CD4-positive, alpha-beta memory T cell (primary cell): ENCODE measurements at regions of chr4 and their contacts with region 1.

Region 1: GRCh38 chr4:39458505-39459300 is at the starts of genes LIAS and RPL9:
- DNase-seq: peak; percentile 92 to 96 (median 94)
- H3K4me3 ChIP-seq: peak within 1 kb of the TSS; percentile 96 to 97
- H3K4me3 Mint-ChIP-seq: peak within 1 kb of the TSS; percentile 96 to 99 (median 98)
- H3K27ac ChIP-seq: peak within 1 kb of the TSS; percentile 99
- H3K27ac Mint-ChIP-seq: peak within 1 kb of the TSS; percentile 99 to 100 (median 100)
- H3K4me1 ChIP-seq: peaks cover 33% of the 10 kb centered on the region
- H3K4me1 Mint-ChIP-seq: peaks cover 22 to 55% (median 33%) of the 10 kb centered on the region in 4 donors
- H3K27me3 ChIP-seq: no peaks in the 10 kb centered on the region
- H3K27me3 Mint-ChIP-seq: no peaks in the 10 kb centered on the region
- total RNA-seq, gene LIAS: 21.7 to 24.7 TPM
- total RNA-seq, gene RPL9: 2,318 to 2,449 TPM

Region 2: DNA sequence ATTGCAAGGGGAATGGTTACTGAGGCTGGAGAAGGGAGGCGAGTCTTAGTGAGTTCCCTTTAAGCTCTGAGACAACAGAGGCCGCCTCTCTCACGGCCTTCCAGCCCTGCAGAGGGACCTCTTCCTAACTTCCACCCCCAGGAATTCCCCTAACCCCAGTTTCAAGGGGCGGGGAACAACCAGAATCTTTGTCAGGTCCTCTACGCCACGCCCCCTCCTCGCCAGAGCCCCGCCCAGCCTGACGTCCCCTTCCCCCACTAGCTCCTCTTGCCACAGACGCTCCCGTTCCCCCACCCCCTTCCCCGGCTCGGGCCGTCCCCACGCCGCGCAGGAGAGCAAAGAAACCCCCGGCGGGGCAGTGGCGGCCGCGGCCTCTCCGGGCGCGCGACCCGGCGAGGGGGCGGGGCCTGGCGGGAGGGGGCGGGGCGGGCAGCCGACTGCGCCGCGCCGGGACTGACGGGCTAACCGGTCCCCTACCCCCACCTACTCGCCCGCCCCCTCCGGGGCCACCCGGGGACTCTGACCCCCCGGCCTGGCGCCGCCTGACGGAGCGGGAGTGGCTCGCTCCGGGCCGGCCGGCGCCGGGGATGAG is 414.2 kb before region 1 on chr4:
- CTCF ChIA-PET with region 1: no interaction called
- POLR2A ChIA-PET with region 1: no interaction called
- intact Hi-C with region 1: loop called (anchors 5 kb)
- DNase-seq: peak; percentile 91 to 100 (median 95)
- H3K4me3 ChIP-seq: peak overlapping the region; percentile 18 to 57
- H3K4me3 Mint-ChIP-seq: peak overlapping the region; percentile 87 to 98 (median 92)
- H3K27ac ChIP-seq: peak overlapping the region; percentile 82
- H3K27ac Mint-ChIP-seq: peak overlapping the region; percentile 94 to 98 (median 97)
- H3K4me1 ChIP-seq: peaks cover 46% of the 10 kb centered on the region
- H3K4me1 Mint-ChIP-seq: peaks cover 39 to 60% (median 45%) of the 10 kb centered on the region in 4 donors
- H3K27me3 ChIP-seq: no peaks in the 10 kb centered on the region
- H3K27me3 Mint-ChIP-seq: no peaks in the 10 kb centered on the region

Region 3: DNA sequence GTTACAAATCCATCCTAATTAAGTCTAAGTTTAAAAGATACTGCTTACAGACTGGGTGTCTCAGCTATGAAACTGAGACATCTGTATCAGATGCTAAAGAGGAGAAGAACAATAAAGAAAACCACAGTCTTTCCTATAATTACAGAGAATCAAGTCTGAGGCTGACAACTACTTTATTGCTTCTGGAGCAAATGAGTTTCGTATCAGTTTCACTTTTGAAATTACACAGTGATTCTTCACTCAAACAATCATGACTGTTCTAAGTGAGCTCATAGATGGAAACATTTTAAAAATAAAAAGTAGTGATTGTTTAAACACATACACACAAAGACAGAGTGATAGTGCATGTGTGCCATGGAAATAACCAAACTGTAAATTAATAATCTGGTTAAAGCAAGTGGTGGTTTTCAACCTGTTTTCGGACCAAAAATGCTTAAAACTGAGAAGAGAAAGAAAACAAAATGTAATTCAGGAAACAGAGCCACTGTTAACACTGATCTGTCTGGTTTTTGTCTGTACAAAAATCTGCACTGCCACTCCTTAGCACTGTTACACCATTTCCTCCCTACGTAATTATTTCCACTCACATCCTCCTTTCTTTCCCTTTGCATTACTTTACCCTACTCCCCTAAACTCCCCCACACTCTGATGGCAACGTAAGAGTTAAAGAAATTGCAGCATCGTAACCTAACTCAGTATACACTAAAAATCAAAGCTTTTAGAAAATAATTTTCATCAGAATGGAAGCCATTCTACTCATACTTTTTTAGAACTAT is 105.0 kb before region 1 on chr4:
- CTCF ChIA-PET with region 1: no interaction called
- POLR2A ChIA-PET with region 1: interaction called, 8 read pairs
- intact Hi-C with region 1: loop called (anchors 2 kb)
- DNase-seq: peak; percentile 46 to 70 (median 63)
- H3K4me3 ChIP-seq: peak overlapping the region; percentile 3 to 61
- H3K4me3 Mint-ChIP-seq: peak overlapping the region; percentile 79 to 92 (median 84)
- H3K27ac ChIP-seq: peak overlapping the region; percentile 73
- H3K27ac Mint-ChIP-seq: peak overlapping the region; percentile 91 to 98 (median 94)
- H3K4me1 ChIP-seq: peaks cover 58% of the 10 kb centered on the region
- H3K4me1 Mint-ChIP-seq: peaks cover 39 to 77% (median 53%) of the 10 kb centered on the region in 4 donors
- H3K27me3 ChIP-seq: no peaks in the 10 kb centered on the region
- H3K27me3 Mint-ChIP-seq: no peaks in the 10 kb centered on the region

Region 4: DNA sequence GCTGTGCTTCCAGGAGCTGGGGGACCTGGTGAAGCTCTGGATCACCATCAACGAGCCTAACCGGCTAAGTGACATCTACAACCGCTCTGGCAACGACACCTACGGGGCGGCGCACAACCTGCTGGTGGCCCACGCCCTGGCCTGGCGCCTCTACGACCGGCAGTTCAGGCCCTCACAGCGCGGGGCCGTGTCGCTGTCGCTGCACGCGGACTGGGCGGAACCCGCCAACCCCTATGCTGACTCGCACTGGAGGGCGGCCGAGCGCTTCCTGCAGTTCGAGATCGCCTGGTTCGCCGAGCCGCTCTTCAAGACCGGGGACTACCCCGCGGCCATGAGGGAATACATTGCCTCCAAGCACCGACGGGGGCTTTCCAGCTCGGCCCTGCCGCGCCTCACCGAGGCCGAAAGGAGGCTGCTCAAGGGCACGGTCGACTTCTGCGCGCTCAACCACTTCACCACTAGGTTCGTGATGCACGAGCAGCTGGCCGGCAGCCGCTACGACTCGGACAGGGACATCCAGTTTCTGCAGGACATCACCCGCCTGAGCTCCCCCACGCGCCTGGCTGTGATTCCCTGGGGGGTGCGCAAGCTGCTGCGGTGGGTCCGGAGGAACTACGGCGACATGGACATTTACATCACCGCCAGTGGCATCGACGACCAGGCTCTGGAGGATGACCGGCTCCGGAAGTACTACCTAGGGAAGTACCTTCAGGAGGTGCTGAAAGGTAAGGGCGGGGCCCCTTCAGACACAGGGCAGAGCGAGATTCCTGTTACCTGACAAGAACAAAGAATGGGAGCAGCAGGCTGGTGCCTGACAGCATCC is 11.7 kb before region 1 on chr4:
- CTCF ChIA-PET with region 1: interaction called, 3 read pairs
- POLR2A ChIA-PET with region 1: interaction called, 39 read pairs
- intact Hi-C with region 1: no loop called
- DNase-seq: peak in 4 of 5 donors; percentile 35 to 71 (median 45)
- H3K4me3 ChIP-seq: no peak overlapping the region
- H3K4me3 Mint-ChIP-seq: peak overlapping the region; percentile 40 to 75 (median 70)
- H3K27ac ChIP-seq: peak overlapping the region; percentile 31
- H3K27ac Mint-ChIP-seq: peak overlapping the region in 5 of 7 donors; percentile 56 to 66 (median 61)
- H3K4me1 ChIP-seq: peaks cover 8% of the 10 kb centered on the region
- H3K4me1 Mint-ChIP-seq: peaks cover 0 to 12% (median 7%) of the 10 kb centered on the region in 4 donors
- H3K27me3 ChIP-seq: no peaks in the 10 kb centered on the region
- H3K27me3 Mint-ChIP-seq: no peaks in the 10 kb centered on the region

Region 5: DNA sequence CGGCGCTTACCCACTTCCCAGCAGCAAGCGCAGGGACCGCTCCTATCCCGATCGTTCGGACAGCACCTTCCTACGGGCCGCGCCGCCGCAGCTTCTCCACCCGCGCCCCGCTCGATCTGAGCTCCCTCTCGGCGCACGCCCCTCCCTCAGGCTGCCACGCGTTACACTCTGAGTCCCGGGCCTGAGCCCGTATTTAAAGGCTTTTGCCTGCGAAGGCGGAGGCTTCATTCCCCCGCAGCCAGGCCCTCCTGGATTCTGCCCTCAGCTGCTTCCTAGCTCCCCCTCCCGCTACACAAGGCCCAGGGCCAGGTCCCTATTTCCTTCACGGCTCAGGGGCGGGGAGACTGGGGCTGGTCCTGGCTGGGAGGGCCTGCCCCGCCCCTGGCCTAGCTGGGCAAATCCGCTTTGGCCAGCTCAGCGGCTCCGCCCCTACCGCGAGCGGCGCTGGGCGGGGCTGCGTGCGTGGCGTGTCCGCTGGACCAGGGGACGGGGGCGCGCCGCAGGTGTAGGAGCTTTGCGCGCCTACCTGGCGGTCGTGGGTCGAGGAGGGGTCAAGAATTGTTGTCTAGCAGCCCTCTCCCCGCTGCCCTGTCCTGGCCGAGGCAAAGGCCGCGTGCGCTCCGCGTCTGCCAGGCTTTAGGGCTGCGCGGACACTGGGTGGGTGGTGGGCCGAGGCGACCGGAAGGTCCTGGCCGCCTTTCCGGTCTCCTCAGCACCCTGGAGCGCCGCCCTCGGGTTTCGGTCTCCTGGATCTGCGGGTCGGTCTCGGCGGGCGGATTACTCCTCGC is 68.8 kb after region 1 on chr4 and contains the start of gene UGDH:
- CTCF ChIA-PET with region 1: no interaction called
- POLR2A ChIA-PET with region 1: interaction called, 23 read pairs
- intact Hi-C with region 1: loop called (anchors 2 kb)
- DNase-seq: peak; percentile 88 to 92 (median 90)
- H3K4me3 ChIP-seq: peak within 1 kb of the TSS; percentile 71 to 91
- H3K4me3 Mint-ChIP-seq: peak within 1 kb of the TSS; percentile 97 to 99 (median 98)
- H3K27ac ChIP-seq: peak within 1 kb of the TSS; percentile 69
- H3K27ac Mint-ChIP-seq: peak within 1 kb of the TSS; percentile 78 to 98 (median 96)
- H3K4me1 ChIP-seq: peaks cover 18% of the 10 kb centered on the region
- H3K4me1 Mint-ChIP-seq: peaks cover 10 to 25% (median 18%) of the 10 kb centered on the region in 4 donors
- H3K27me3 ChIP-seq: no peaks in the 10 kb centered on the region
- H3K27me3 Mint-ChIP-seq: no peaks in the 10 kb centered on the region
- total RNA-seq, gene UGDH: 21.6 to 26.5 TPM

Region 6: GRCh38 chr4:39587881-39588280 is 129.2 kb after region 1 on chr4:
- CTCF ChIA-PET with region 1: no interaction called
- POLR2A ChIA-PET with region 1: no interaction called
- intact Hi-C with region 1: no loop called
- DNase-seq: no peak
- H3K4me3 ChIP-seq: no peak overlapping the region
- H3K4me3 Mint-ChIP-seq: no peak overlapping the region
- H3K27ac ChIP-seq: no peak overlapping the region
- H3K27ac Mint-ChIP-seq: no peak overlapping the region
- H3K4me1 ChIP-seq: no peaks in the 10 kb centered on the region
- H3K4me1 Mint-ChIP-seq: no peaks in the 10 kb centered on the region
- H3K27me3 ChIP-seq: no peaks in the 10 kb centered on the region
- H3K27me3 Mint-ChIP-seq: no peaks in the 10 kb centered on the region

Region 7: DNA sequence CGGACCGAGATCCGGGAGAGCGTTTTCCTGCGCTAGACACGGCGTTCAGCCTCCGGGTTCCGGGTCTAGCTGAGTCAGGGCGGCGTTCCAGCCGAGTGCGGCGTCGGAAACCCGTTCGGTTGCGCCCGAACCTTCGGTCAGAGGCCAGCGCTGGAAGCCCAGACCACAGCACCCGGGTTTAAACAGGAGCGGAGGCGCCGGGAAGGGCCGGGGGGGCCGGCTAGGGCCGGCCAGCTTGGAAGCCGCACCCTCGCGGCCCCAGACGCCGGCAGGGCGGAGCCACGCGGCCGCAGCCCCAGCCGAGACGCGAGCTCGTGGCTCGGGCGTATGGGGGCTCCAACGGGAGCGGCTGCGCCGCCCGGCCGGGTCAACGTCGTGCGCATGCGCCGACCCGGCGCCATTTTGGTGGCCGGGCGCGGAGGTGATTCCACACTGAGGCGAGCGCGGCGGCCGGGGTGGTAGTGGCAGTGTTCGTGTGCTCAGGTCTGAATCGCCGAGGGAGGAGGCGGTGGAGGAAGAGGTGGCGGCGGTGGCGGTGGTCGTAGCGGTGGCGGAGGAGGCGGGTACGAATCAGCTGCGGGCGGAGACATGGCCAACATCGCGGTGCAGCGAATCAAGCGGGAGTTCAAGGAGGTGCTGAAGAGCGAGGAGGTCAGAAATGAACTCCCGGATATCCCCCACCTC is 239.2 kb after region 1 on chr4 and contains the start of gene UBE2K:
- CTCF ChIA-PET with region 1: no interaction called
- POLR2A ChIA-PET with region 1: interaction called, 14 read pairs
- intact Hi-C with region 1: loop called (anchors 5 kb)
- DNase-seq: peak; percentile 86 to 93 (median 91)
- H3K4me3 ChIP-seq: peak within 1 kb of the TSS; percentile 79 to 93
- H3K4me3 Mint-ChIP-seq: peak within 1 kb of the TSS; percentile 96 to 100 (median 98)
- H3K27ac ChIP-seq: peak within 1 kb of the TSS; percentile 88
- H3K27ac Mint-ChIP-seq: peak within 1 kb of the TSS; percentile 94 to 100 (median 99)
- H3K4me1 ChIP-seq: peaks cover 50% of the 10 kb centered on the region
- H3K4me1 Mint-ChIP-seq: peaks cover 27 to 54% (median 37%) of the 10 kb centered on the region in 4 donors
- H3K27me3 ChIP-seq: no peaks in the 10 kb centered on the region
- H3K27me3 Mint-ChIP-seq: no peaks in the 10 kb centered on the region
- total RNA-seq, gene UBE2K: 45.0 to 51.2 TPM